ENCODE measurements at regions of chr12 and their contacts with region 1.

Region 1: GRCh38 chr12:101839324-101840283 is 8.8 kb upstream of the GNPTAB start:
- DNase-seq: peak; percentile 77
- ATAC-seq: peak; percentile 55
- H3K4me3 Mint-ChIP-seq: no peak overlapping the region
- H3K27ac Mint-ChIP-seq: peak overlapping the region; percentile 48
- H3K4me1 Mint-ChIP-seq: peaks cover 18% of the 10 kb centered on the region
- H3K27me3 Mint-ChIP-seq: peaks cover 4% of the 10 kb centered on the region

Region 2: GRCh38 chr12:101414533-101415119 is 425.0 kb before region 1 on chr12:
- CTCF ChIA-PET with region 1: interaction called, 18 read pairs
- DNase-seq: no peak
- ATAC-seq: no peak
- H3K4me3 Mint-ChIP-seq: no peak overlapping the region
- H3K27ac Mint-ChIP-seq: no peak overlapping the region
- H3K4me1 Mint-ChIP-seq: no peaks in the 10 kb centered on the region
- H3K27me3 Mint-ChIP-seq: peaks cover 30% of the 10 kb centered on the region

Region 3: DNA sequence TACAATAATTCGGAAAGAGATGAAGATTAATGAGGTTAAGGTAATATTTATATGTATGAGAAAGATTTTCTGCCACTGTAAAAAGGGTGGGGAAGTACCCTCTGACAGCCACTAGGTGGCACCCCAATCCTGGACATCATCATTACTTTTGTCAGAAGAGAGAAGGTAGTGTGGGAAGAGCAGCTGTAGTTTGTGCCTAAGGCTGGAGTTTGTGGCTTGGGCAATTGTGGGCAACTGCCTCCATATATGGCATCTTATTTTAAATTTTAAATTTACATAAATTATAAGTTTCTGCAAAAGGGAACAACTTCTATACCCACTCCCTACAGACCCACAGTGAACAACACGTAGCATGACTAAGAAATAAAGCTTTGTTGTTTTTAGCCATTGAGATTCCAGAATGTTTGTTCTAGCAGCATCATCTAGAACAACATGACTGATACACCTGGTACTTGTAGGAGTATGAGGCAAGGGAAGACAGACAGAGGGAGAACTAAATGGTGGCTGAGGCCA is 65.9 kb before region 1 on chr12:
- CTCF ChIA-PET with region 1: interaction called, 79 read pairs
- DNase-seq: peak; percentile 78
- ATAC-seq: peak; percentile 79
- H3K4me3 Mint-ChIP-seq: no peak overlapping the region
- H3K27ac Mint-ChIP-seq: peak overlapping the region; percentile 62
- H3K4me1 Mint-ChIP-seq: peaks cover 30% of the 10 kb centered on the region
- H3K27me3 Mint-ChIP-seq: no peaks in the 10 kb centered on the region

Region 4: GRCh38 chr12:101782273-101782731 is 57.3 kb before region 1 on chr12:
- CTCF ChIA-PET with region 1: interaction called, 28 read pairs
- DNase-seq: peak; percentile 52
- ATAC-seq: peak; percentile 61
- H3K4me3 Mint-ChIP-seq: no peak overlapping the region
- H3K27ac Mint-ChIP-seq: peak overlapping the region; percentile 82
- H3K4me1 Mint-ChIP-seq: peaks cover 53% of the 10 kb centered on the region
- H3K27me3 Mint-ChIP-seq: no peaks in the 10 kb centered on the region

Region 5: GRCh38 chr12:101792051-101792931 is 47.3 kb before region 1 on chr12:
- CTCF ChIA-PET with region 1: interaction called, 34 read pairs
- DNase-seq: no peak
- ATAC-seq: no peak
- H3K4me3 Mint-ChIP-seq: peak overlapping the region; percentile 7
- H3K27ac Mint-ChIP-seq: peak overlapping the region; percentile 76
- H3K4me1 Mint-ChIP-seq: peaks cover 59% of the 10 kb centered on the region
- H3K27me3 Mint-ChIP-seq: no peaks in the 10 kb centered on the region

Region 6: DNA sequence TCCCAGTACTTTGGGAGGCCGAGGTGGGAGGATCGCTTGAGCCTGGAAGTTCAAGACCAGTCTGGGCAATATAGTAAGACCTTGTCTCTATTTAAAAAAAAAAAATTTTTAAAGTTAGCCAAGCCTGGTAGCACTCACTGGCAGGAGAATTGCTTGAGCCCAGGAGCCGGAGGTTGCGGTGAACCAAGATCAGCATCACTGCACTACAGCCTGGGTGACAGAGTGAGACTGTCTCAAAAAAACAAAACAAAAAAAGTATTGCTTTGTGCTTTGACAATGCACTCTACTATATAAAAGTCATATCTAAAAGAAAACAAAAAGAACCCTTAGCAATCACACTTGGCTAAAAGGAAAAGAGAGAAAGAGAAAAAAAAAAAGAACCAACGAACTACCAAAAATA is 35.6 kb before region 1 on chr12:
- CTCF ChIA-PET with region 1: no interaction called
- DNase-seq: no peak
- ATAC-seq: no peak
- H3K4me3 Mint-ChIP-seq: peak overlapping the region; percentile 48
- H3K27ac Mint-ChIP-seq: peak overlapping the region; percentile 85
- H3K4me1 Mint-ChIP-seq: peaks cover 64% of the 10 kb centered on the region
- H3K27me3 Mint-ChIP-seq: no peaks in the 10 kb centered on the region

Region 7: GRCh38 chr12:101823891-101824290 is 15.7 kb before region 1 on chr12:
- CTCF ChIA-PET with region 1: interaction called, 42 read pairs
- DNase-seq: peak; percentile 86
- ATAC-seq: peak; percentile 91
- H3K4me3 Mint-ChIP-seq: peak overlapping the region; percentile 61
- H3K27ac Mint-ChIP-seq: peak overlapping the region; percentile 92
- H3K4me1 Mint-ChIP-seq: peaks cover 83% of the 10 kb centered on the region
- H3K27me3 Mint-ChIP-seq: no peaks in the 10 kb centered on the region

Region 8: GRCh38 chr12:101854747-101855146 is 15.1 kb after region 1 on chr12:
- CTCF ChIA-PET with region 1: interaction called, 15 read pairs
- DNase-seq: no peak
- ATAC-seq: no peak
- H3K4me3 Mint-ChIP-seq: no peak overlapping the region
- H3K27ac Mint-ChIP-seq: no peak overlapping the region
- H3K4me1 Mint-ChIP-seq: peaks cover 25% of the 10 kb centered on the region
- H3K27me3 Mint-ChIP-seq: no peaks in the 10 kb centered on the region

Region 9: DNA sequence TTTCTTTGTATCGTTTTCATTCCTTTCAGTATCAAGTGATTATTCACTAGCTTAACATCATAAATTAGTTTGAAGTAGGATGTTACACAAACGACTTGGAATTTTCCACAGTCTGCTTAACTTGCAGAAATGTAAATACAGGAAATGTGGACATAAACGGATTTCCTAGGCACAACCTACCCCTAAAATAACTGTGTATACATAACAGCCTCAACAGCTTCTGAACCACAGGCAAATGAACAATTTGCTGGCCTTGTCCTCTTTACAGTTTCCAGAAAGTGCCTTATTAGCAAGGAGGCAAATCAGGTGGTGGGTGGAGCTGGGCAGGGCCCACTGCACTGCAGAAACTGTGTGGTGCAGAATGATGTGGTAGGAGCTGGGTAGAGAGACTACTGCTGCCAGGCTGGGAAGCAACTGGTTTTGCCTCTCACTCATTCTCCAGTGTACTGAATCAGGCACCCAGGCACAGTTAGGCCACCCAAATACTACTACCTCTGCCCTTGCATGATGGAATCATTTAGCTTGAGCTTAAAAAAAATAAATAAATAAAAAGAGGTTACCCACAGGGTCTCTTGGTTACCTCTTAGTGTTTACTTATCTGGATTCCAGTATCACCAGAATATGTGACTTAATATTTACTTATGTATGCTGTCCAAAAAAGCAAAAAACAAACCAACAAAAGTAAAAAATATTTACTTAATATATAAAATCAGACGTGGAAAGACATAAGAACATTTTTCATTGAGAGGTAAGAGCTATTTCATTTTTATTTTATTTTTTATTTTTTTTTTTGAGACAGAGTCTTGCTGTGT is 52.1 kb after region 1 on chr12:
- CTCF ChIA-PET with region 1: no interaction called
- DNase-seq: no peak
- ATAC-seq: peak; percentile 33
- H3K4me3 Mint-ChIP-seq: no peak overlapping the region
- H3K27ac Mint-ChIP-seq: no peak overlapping the region
- H3K4me1 Mint-ChIP-seq: peaks cover 6% of the 10 kb centered on the region
- H3K27me3 Mint-ChIP-seq: no peaks in the 10 kb centered on the region

Region 10: DNA sequence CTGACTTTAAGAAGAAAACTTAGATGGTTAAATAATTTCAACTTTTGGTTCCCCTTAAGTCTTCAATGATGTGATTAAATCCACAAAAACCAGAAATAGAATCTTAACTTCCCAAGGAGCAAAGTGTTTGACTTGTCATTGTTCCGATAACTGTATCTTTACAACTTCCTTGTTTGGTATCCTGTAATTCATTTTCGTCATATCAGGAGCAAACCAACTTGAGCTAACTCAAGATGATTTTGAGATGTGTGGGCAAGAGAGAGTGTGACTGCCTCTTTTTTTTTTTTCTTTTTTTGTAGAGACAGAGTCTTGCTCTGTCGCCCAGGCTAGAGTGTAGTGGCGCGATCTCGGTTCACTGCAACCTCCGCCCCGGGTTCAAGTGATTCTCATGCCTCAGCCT is 63.0 kb after region 1 on chr12:
- CTCF ChIA-PET with region 1: no interaction called
- DNase-seq: no peak
- ATAC-seq: no peak
- H3K4me3 Mint-ChIP-seq: no peak overlapping the region
- H3K27ac Mint-ChIP-seq: no peak overlapping the region
- H3K4me1 Mint-ChIP-seq: no peaks in the 10 kb centered on the region
- H3K27me3 Mint-ChIP-seq: no peaks in the 10 kb centered on the region

Region 11: DNA sequence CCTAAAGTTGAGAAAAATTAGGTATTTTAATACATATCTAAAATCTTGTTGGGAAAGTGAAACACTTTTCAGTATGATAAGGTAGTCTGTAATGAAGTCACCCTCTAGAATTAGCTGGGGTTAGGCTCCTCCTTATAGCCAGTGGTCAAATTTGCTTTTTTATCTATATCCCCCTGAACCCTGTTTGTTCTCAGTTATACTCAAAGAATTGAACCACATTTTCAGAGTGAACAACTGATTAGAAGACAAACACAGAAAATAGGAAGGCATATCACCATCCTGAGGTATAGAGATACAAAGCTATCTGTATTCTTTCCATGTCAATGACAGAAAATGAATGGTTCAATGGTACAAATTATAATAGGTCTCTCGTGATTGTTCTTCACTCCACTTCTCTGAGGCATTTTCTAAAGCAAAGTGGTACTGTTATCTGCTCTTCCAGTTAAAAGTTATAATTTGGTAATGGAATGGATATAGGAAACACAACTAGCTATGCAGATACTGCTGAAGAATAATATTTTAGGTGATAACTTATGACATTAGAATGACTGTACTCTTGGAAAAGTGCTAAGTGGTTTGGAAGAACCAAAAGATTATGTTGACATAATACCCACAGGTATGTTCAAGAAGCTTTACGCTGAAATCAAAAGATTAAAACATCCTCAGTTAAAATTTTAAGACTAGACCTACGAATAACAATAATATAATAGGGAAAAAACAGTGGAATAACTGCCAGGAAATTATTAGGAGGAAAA is 194.6 kb after region 1 on chr12:
- CTCF ChIA-PET with region 1: no interaction called
- DNase-seq: no peak
- ATAC-seq: no peak
- H3K4me3 Mint-ChIP-seq: no peak overlapping the region
- H3K27ac Mint-ChIP-seq: no peak overlapping the region
- H3K4me1 Mint-ChIP-seq: no peaks in the 10 kb centered on the region
- H3K27me3 Mint-ChIP-seq: no peaks in the 10 kb centered on the region

Measured in activated CD8-positive, alpha-beta memory T cell treated with anti-CD3 and anti-CD28 coated beads, Interleukin-2, amount 10 ng/mL, durations not matched to agents 7 days and 5 days (primary cell).